ENCODE measurements at regions of chr6 and their contacts with region 1.

Region 1: GRCh38 chr6:14431385-14432330 is 314.1 kb downstream of the CD83 start:
- DNase-seq: peak in 1 of 2 donors; percentile 44
- ATAC-seq: peak; percentile 83 to 95 (median 94)
- H3K4me3 ChIP-seq: peak overlapping the region in 9 of 10 donors; percentile 16 to 52 (median 40)
- H3K27ac ChIP-seq: peak overlapping the region in 9 of 10 donors; percentile 48 to 77 (median 62)
- H3K4me1 ChIP-seq: peaks cover 0 to 38% (median 0%) of the 10 kb centered on the region in 9 donors
- H3K27me3 ChIP-seq: no peaks in the 10 kb centered on the region
- CTCF ChIP-seq: no peak

Region 2: DNA sequence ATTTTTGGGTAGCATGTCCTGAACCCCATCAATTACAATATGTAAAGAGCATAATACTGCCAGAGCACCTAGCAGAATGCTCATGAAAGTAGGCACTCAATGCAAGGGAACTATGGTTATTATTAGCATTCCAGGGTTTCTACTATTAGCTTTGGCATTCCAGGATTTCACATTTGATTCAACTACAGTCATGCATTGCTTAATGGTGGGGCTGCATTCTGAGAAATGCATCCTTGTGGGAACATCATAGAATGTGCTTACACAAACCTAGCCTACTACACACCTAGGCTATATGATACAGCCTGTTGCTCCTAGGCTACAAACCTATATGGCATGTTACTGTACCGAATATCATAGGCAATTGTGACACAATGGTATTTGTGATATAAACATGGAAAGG is 66.3 kb before region 1 on chr6:
- intact Hi-C with region 1: loop called in 1 of 10 experiments (anchors 5 kb)
- DNase-seq: no peak
- ATAC-seq: no peak
- H3K4me3 ChIP-seq: no peak overlapping the region
- H3K27ac ChIP-seq: no peak overlapping the region
- H3K4me1 ChIP-seq: peaks cover 0 to 46% (median 24%) of the 10 kb centered on the region in 9 donors
- H3K27me3 ChIP-seq: no peaks in the 10 kb centered on the region
- CTCF ChIP-seq: no peak

Region 3: DNA sequence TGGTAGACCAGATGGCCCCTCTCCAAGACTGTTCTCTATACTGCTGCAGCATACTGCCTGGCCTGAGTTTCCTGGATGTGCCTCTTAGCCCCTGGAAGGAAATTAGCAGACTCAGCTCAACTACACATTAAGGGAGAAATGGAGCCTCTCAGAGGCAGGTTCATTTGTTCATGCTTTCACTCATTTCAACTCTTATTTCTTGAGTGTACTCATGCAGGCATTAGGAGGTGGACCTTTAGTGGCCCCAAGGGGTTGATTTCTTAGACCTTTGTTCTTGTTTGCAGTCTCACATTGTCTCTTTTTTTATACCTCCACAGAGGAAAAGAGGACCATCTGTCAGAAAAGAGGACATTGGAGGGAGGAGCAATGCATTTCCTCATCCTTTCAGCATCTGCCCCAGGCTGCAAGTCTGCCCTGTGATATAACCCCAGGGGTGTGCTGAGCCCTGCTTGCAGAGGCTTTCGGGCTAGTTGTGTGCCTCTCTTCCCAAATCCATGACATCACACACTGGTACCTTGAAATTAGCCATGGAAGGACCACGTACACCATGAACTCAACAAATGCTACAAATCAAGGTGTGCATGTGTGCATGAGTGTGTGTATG is 142.1 kb after region 1 on chr6:
- intact Hi-C with region 1: loop called in 2 of 10 experiments (anchors 10 kb)
- DNase-seq: no peak
- ATAC-seq: peak in 1 of 8 donors; percentile 16
- H3K4me3 ChIP-seq: no peak overlapping the region
- H3K27ac ChIP-seq: peak overlapping the region in 1 of 10 donors; percentile 21
- H3K4me1 ChIP-seq: peaks cover 0 to 28% (median 3%) of the 10 kb centered on the region in 9 donors
- H3K27me3 ChIP-seq: no peaks in the 10 kb centered on the region
- CTCF ChIP-seq: no peak

Region 4: DNA sequence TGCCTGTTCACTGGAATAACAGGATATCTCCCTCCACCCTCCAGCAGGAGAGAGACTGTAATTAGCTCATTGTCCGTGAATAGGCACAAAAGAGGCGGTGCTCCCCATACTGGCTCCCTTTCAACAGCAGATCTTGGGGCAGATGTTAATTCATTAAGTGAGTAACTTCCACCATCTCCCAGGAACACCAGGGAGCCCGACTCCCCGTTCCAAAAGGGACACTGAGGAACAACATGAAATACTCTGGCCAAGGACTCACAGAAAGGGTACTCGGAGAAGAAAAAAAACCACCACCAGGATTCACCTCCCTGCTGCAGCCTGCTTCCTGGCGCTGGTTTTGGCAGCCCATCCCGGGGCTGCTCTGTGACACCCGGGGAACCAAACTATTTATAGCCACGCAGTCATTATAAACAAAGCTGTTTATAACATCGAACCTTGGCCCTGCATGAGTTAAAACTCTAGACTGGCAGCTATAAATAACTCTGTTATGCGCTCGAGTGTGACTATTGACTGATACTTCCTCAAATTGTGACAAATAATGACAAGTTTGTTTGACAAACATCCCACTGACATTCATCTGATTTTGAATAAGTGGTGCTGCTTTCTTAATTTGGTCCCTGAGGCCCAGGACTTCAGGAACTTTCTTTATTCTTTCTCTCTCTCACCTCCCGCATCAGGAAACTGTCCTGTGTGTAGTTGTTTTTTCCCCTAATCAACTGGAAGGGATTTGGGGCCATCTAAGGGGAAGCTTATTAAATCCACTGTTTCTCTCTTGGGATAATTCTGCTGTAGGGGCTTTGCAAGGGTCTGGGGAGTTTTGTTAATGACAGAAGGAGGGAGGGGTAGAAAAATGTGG is 207.5 kb after region 1 on chr6:
- intact Hi-C with region 1: loop called in 1 of 10 experiments (anchors 5 kb)
- DNase-seq: peak; percentile 67 to 79
- ATAC-seq: peak; percentile 91 to 96 (median 94)
- H3K4me3 ChIP-seq: peak overlapping the region in 9 of 10 donors; percentile 7 to 45 (median 35)
- H3K27ac ChIP-seq: peak overlapping the region; percentile 48 to 90 (median 79)
- H3K4me1 ChIP-seq: peaks cover 0 to 67% (median 35%) of the 10 kb centered on the region in 9 donors
- H3K27me3 ChIP-seq: no peaks in the 10 kb centered on the region
- CTCF ChIP-seq: peak in 5 of 9 donors; percentile 8 to 30 (median 20)

Measured in heart right ventricle (tissue), 16 donors.